Endothelial cell of umbilical vein (primary cell): ENCODE measurements at regions of chr11 and their contacts with region 1.

Region 1: DNA sequence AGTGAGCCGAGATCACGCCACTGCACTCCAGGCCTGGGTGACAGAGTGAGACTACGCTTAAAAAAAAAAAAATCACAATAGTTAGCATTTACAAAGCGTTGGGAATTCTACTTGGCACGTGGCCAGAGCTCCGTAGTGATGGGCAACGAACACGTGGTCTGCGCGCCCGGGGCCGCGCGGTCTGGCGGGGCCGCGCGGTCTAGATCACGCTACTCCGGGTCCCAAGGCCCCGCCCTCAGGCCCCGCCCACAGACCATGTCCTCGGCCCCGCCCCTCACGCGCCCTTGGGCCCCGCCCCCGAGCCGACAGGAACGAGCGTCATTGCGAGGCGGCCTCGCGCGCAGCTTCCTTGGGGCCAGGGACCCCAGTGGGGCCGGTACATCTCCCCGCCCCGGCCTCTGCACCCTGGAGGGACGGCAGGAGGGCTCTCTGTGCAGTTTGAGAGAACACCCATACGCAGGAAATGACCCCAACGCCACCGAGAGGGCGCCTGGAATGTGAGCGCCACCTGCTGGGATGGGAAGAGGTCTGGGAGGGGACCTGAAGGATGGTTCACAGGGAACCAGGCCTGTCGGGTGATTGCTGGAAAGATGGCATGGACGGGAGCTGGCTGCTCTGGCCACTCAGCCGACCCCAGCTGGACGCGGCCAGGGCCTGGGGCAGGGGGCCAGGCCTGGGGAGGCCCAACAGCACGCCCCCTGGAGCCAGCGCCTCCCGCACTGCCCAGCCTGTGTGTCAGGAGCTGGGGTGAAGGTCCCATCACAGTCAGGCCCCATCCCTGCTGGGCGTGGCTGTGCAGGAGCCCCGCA is 2.0 kb upstream of the PTDSS2 start:
- DNase-seq: peak; percentile 91
- H3K4me3 ChIP-seq: peak overlapping the region; percentile 7 to 58 (median 8)
- H3K27ac ChIP-seq: peak overlapping the region; percentile 34
- H3K4me1 ChIP-seq: peaks cover 14% of the 10 kb centered on the region
- H3K27me3 ChIP-seq: peaks cover 0 to 2% of the 10 kb centered on the region in 2 experiments
- CTCF ChIP-seq: peak; percentile 85 to 86
- POLR2A ChIP-seq: peak; percentile 82

Region 2: GRCh38 chr11:207208-207862 is 240.8 kb before region 1 on chr11 and contains the starts of genes BET1L and RIC8A:
- CTCF ChIA-PET with region 1: interaction called, 9 read pairs
- POLR2A ChIA-PET with region 1: no interaction called
- dilution Hi-C with region 1: no loop called
- intact Hi-C with region 1: loop called (anchors 1 kb)
- DNase-seq: peak; percentile 97
- H3K4me3 ChIP-seq: peak within 1 kb of the TSS; percentile 68 to 92 (median 74)
- H3K27ac ChIP-seq: peak within 1 kb of the TSS; percentile 96
- H3K4me1 ChIP-seq: peaks cover 23% of the 10 kb centered on the region
- H3K27me3 ChIP-seq: no peaks in the 10 kb centered on the region
- CTCF ChIP-seq: no peak
- POLR2A ChIP-seq: peak; percentile 84
- total RNA-seq, gene BET1L: 31.0 and 35.5 TPM in 2 replicates
- total RNA-seq, gene RIC8A: 112 and 119 TPM in 2 replicates

Region 3: GRCh38 chr11:304915-305843 is 142.9 kb before region 1 on chr11:
- CTCF ChIA-PET with region 1: interaction called, 23 read pairs
- POLR2A ChIA-PET with region 1: no interaction called
- dilution Hi-C with region 1: no loop called
- intact Hi-C with region 1: loop called (anchors 1 kb)
- DNase-seq: peak; percentile 78
- H3K4me3 ChIP-seq: no peak overlapping the region
- H3K27ac ChIP-seq: no peak overlapping the region
- H3K4me1 ChIP-seq: peaks cover 15% of the 10 kb centered on the region
- H3K27me3 ChIP-seq: peaks cover 2 to 7% of the 10 kb centered on the region in 2 experiments
- CTCF ChIP-seq: peak; percentile 64 to 66
- POLR2A ChIP-seq: no peak

Region 4: GRCh38 chr11:369336-370018 is 78.7 kb before region 1 on chr11 and contains the start of gene B4GALNT4:
- CTCF ChIA-PET with region 1: interaction called, 6 read pairs
- POLR2A ChIA-PET with region 1: no interaction called
- dilution Hi-C with region 1: no loop called
- intact Hi-C with region 1: loop called (anchors 2 kb)
- DNase-seq: no peak
- H3K4me3 ChIP-seq: peak within 1 kb of the TSS in 1 of 3 experiments; percentile 21
- H3K27ac ChIP-seq: no peak within 1 kb of the TSS
- H3K4me1 ChIP-seq: no peaks in the 10 kb centered on the region
- H3K27me3 ChIP-seq: peaks cover 17 to 20% of the 10 kb centered on the region in 2 experiments
- CTCF ChIP-seq: no peak
- POLR2A ChIP-seq: no peak
- total RNA-seq, gene B4GALNT4: 5.2 and 9.6 TPM in 2 replicates

Region 5: GRCh38 chr11:406978-407739 is 41.0 kb before region 1 on chr11:
- CTCF ChIA-PET with region 1: interaction called, 57 read pairs
- POLR2A ChIA-PET with region 1: no interaction called
- dilution Hi-C with region 1: no loop called
- intact Hi-C with region 1: no loop called
- DNase-seq: peak; percentile 46
- H3K4me3 ChIP-seq: peak overlapping the region; percentile 42 to 51 (median 47)
- H3K27ac ChIP-seq: peak overlapping the region; percentile 38
- H3K4me1 ChIP-seq: peaks cover 5% of the 10 kb centered on the region
- H3K27me3 ChIP-seq: no peaks in the 10 kb centered on the region
- CTCF ChIP-seq: no peak
- POLR2A ChIP-seq: peak; percentile 23

Region 6: DNA sequence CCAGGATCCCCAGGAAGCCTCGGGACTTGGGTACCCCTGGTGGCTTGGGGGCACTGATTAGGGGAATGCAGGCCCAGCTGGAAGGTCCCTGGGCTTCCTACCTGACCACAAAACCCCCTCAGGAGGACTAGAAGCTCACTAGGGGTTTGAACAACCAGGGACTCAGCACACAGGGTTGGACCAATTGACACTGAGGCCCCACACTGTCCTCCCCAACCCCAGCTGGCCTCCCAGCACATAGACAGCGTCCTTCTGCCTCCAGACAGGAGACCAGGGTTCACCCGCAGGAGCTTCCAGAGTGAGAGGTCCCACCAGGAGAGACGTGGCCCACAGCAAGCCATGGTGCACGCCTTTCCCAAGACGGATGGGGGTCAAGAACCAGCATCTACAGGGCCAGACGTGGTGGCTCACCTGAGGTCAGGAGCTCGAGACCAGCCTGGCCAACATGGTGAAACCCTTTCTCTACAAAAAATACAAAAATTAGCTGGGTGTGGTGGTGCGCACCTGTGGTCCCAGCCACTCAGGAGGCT is 21.3 kb before region 1 on chr11:
- CTCF ChIA-PET with region 1: interaction called, 18 read pairs
- POLR2A ChIA-PET with region 1: no interaction called
- dilution Hi-C with region 1: no loop called
- intact Hi-C with region 1: no loop called
- DNase-seq: no peak
- H3K4me3 ChIP-seq: no peak overlapping the region
- H3K27ac ChIP-seq: no peak overlapping the region
- H3K4me1 ChIP-seq: no peaks in the 10 kb centered on the region
- H3K27me3 ChIP-seq: peaks cover 7 to 14% of the 10 kb centered on the region in 2 experiments
- CTCF ChIP-seq: no peak
- POLR2A ChIP-seq: no peak

Region 7: DNA sequence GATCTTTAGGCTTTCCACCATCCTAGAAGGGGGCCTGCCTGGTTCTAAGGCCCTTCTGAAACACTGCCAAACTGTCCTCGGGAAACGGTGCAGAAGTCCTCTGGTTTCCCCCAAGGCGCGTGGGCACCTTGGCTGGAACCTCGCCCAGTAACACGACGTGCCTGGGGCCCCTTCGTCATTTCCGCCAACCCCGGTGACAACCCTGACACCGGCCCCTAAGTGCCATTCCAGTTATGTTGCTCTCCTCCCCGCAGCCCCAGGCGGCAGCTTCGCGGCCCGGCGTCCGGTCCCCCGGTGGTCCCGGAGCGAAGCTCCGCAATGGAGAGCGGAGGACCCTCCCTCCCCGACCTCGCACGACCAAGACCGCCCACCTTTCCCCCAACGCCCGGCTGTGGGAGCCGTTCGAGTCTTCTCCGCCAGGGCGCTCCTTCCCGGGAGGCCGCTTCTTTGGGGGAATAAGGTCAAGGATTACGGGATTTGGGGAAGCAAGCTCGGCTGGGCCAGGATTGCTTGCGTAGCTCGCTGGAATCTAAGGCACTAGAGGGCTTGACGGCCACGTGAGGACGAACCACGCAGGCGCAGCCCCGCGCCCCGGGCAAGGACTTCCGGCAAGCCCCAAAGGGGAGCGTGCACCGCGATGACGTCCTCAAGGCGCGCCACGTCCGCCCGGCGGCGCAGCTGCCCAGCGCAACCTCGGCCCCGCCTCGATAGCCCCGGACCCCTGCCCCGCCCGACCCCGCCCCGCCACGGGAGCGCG is 58.3 kb after region 1 on chr11:
- CTCF ChIA-PET with region 1: interaction called, 3 read pairs
- POLR2A ChIA-PET with region 1: interaction called, 3 read pairs
- dilution Hi-C with region 1: no loop called
- intact Hi-C with region 1: loop called (anchors 1 kb)
- DNase-seq: peak; percentile 98
- H3K4me3 ChIP-seq: peak overlapping the region; percentile 69 to 81 (median 79)
- H3K27ac ChIP-seq: peak overlapping the region; percentile 99
- H3K4me1 ChIP-seq: peaks cover 24% of the 10 kb centered on the region
- H3K27me3 ChIP-seq: no peaks in the 10 kb centered on the region
- CTCF ChIP-seq: no peak
- POLR2A ChIP-seq: peak; percentile 53

Region 8: DNA sequence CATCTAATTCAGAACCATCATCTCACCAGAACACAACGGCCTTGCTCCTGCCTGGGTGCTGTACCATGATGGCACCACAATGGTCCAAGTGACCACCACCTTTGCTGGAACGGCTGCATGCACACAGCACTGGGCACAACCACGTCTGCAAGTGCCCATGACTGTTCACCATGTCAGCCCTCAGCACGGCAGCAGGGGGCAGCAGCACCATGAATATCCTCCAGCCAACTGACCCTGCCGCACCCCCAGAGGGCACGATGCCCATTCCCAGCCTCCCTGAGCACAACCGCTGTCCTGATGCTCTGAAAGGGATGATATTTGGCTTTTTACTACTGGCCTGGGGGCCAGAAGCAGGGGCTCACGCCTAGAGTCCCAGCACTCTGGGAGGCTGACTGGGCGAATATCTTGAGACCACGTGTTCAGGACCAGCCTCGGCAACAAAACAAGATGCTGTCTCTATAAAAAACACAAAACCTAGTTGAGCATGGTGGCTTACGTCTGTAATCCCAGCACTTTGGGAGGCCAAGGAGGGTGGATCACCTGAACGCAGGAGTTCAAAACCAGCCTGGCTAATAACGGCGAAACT is 214.7 kb after region 1 on chr11:
- CTCF ChIA-PET with region 1: no interaction called
- POLR2A ChIA-PET with region 1: no interaction called
- dilution Hi-C with region 1: no loop called
- intact Hi-C with region 1: no loop called
- DNase-seq: peak; percentile 54
- H3K4me3 ChIP-seq: no peak overlapping the region
- H3K27ac ChIP-seq: no peak overlapping the region
- H3K4me1 ChIP-seq: no peaks in the 10 kb centered on the region
- H3K27me3 ChIP-seq: no peaks in the 10 kb centered on the region
- CTCF ChIP-seq: peak; percentile 76 to 86
- POLR2A ChIP-seq: no peak